ENCODE measurements at regions of chr3 and their contacts with region 1.

Region 1: GRCh38 chr3:111967651-111968274 is 11.1 kb upstream of the ABHD10 start:
- DNase-seq: peak; percentile 87
- H3K4me3 Mint-ChIP-seq: no peak overlapping the region
- H3K27ac Mint-ChIP-seq: no peak overlapping the region
- H3K4me1 Mint-ChIP-seq: peaks cover 9% of the 10 kb centered on the region
- H3K27me3 Mint-ChIP-seq: peaks cover 5% of the 10 kb centered on the region

Region 2: DNA sequence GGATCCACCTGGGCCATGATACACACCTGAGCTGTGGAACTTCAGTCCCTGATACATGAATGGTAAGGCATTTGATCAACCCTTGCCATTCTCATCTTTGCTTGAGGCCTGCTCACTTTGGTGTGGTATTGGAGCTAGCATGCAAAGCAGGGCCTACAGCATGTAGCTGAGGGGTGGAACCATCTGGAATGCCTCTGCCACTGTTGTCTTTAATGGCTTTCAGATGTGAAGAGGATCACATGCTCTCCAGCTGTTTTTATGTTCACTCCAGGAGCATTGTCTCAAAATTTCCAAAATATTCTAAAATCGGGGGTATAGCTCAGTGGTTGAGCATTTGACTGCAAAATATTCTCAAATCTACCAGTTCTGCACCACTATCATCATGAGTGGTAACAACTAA is 173.1 kb before region 1 on chr3:
- CTCF ChIA-PET with region 1: no interaction called
- DNase-seq: no peak
- H3K4me3 Mint-ChIP-seq: no peak overlapping the region
- H3K27ac Mint-ChIP-seq: no peak overlapping the region
- H3K4me1 Mint-ChIP-seq: no peaks in the 10 kb centered on the region
- H3K27me3 Mint-ChIP-seq: no peaks in the 10 kb centered on the region

Region 3: GRCh38 chr3:111859974-111860859 is 107.5 kb before region 1 on chr3:
- CTCF ChIA-PET with region 1: interaction called, 13 read pairs
- DNase-seq: peak; percentile 69
- H3K4me3 Mint-ChIP-seq: peak overlapping the region; percentile 92
- H3K27ac Mint-ChIP-seq: peak overlapping the region; percentile 77
- H3K4me1 Mint-ChIP-seq: peaks cover 25% of the 10 kb centered on the region
- H3K27me3 Mint-ChIP-seq: peaks cover 68% of the 10 kb centered on the region

Region 4: GRCh38 chr3:111956995-111957734 is 10.6 kb before region 1 on chr3:
- CTCF ChIA-PET with region 1: interaction called, 14 read pairs
- DNase-seq: no peak
- H3K4me3 Mint-ChIP-seq: no peak overlapping the region
- H3K27ac Mint-ChIP-seq: no peak overlapping the region
- H3K4me1 Mint-ChIP-seq: no peaks in the 10 kb centered on the region
- H3K27me3 Mint-ChIP-seq: no peaks in the 10 kb centered on the region

Region 5: DNA sequence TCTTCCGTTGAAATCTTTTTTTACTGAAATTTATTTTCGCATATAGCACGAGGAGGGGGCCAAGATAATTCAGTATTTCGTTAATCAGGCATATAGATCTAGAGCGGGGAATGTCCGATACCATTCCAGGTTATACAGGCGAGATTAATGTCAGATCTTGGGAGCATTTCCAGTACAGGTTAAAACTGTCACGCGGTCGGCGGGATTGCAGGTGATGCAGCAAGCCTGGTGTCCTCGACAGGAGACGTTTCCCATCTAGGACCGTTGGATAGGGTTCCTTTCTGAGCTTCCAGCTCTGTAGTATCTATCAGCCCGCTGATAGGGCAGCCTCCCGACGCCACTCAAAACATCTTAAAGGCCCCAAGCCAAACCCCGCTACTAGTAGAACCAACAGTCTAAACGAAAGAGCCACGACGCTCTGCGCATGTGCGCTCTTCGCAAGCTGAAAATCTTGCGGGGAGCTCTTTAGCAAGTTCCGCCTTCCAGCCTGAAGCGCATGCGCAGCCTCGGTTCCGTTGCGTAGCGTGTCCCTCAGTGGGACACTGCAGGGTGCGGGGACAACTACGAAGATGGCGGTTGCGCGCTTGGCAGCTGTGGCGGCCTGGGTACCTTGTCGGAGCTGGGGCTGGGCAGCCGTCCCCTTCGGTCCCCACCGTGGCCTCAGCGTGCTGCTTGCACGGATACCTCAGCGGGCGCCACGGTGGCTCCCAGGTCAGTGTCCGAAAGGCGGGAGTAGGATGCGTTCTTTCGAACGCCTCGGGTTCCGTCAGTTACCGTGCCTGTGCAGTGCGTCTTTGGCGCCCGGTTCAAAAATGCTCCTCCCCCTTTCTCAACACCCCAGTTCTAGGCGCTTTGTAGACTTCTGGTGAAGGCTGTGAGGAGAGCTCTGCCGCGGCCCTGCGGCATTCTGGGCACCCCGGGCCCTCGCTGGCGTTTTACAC is 11.0 kb after region 1 on chr3 and contains the start of gene ABHD10:
- CTCF ChIA-PET with region 1: interaction called, 31 read pairs
- DNase-seq: peak; percentile 98
- H3K4me3 Mint-ChIP-seq: peak within 1 kb of the TSS; percentile 87
- H3K27ac Mint-ChIP-seq: peak within 1 kb of the TSS; percentile 96
- H3K4me1 Mint-ChIP-seq: peaks cover 41% of the 10 kb centered on the region
- H3K27me3 Mint-ChIP-seq: peaks cover 12% of the 10 kb centered on the region